Thyroid gland (tissue), 4 donors: ENCODE measurements at regions of chrX and their contacts with region 1.

Region 1: DNA sequence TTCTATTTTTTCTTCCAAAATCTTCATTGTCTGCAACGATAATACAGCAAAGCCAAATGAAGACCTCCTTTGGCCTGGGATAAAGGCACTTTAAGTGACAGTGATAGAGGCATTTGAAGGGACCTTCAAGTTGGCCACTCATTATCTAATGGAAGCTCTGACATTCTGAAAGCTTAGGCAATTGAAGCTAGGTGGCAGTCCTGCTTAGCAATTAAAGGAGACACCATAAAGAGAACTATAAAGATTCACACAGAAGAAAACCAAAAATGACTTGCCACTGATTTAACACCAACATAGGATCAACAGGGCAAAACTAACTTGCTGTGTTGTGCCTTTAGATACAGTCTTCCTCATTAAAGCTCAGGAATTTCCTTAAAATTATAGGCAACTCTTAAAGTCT is 103.3 kb upstream of the TSPAN7 start:
- DNase-seq: no peak
- H3K4me3 ChIP-seq: no peak overlapping the region
- H3K27ac ChIP-seq: no peak overlapping the region
- H3K4me1 ChIP-seq: no peaks in the 10 kb centered on the region
- H3K27me3 ChIP-seq: no peaks in the 10 kb centered on the region
- CTCF ChIP-seq: peak in 4 of 6 experiments; percentile 34 to 54 (median 46)
- POLR2A ChIP-seq: no peak

Region 2: GRCh38 chrX:38618180-38618579 is 160.1 kb after region 1 on chrX:
- intact Hi-C with region 1: no loop called
- DNase-seq: no peak
- H3K4me3 ChIP-seq: no peak overlapping the region
- H3K27ac ChIP-seq: no peak overlapping the region
- H3K4me1 ChIP-seq: peaks cover 0 to 5% of the 10 kb centered on the region in 2 donors
- H3K27me3 ChIP-seq: no peaks in the 10 kb centered on the region
- CTCF ChIP-seq: no peak
- POLR2A ChIP-seq: no peak

Region 3: GRCh38 chrX:38654302-38654701 is 196.2 kb after region 1 on chrX:
- intact Hi-C with region 1: loop called (anchors 5 kb)
- DNase-seq: no peak
- H3K4me3 ChIP-seq: no peak overlapping the region
- H3K27ac ChIP-seq: no peak overlapping the region
- H3K4me1 ChIP-seq: no peaks in the 10 kb centered on the region
- H3K27me3 ChIP-seq: no peaks in the 10 kb centered on the region
- CTCF ChIP-seq: peak in 5 of 6 experiments; percentile 18 to 48 (median 44)
- POLR2A ChIP-seq: no peak